ENCODE measurements at regions of chr10 and their contacts with region 1.

Region 1: GRCh38 chr10:80924063-80924952 is 386.6 kb downstream of the SH2D4B start:
- DNase-seq: no peak
- H3K4me3 ChIP-seq: no peak overlapping the region
- H3K27me3 ChIP-seq: no peaks in the 10 kb centered on the region
- CTCF ChIP-seq: peak; percentile 48

Region 2: GRCh38 chr10:80829611-80830010 is 94.7 kb before region 1 on chr10:
- CTCF ChIA-PET with region 1: no interaction called
- POLR2A ChIA-PET with region 1: no interaction called
- DNase-seq: no peak
- H3K4me3 ChIP-seq: no peak overlapping the region
- H3K27me3 ChIP-seq: no peaks in the 10 kb centered on the region
- CTCF ChIP-seq: no peak

Region 3: DNA sequence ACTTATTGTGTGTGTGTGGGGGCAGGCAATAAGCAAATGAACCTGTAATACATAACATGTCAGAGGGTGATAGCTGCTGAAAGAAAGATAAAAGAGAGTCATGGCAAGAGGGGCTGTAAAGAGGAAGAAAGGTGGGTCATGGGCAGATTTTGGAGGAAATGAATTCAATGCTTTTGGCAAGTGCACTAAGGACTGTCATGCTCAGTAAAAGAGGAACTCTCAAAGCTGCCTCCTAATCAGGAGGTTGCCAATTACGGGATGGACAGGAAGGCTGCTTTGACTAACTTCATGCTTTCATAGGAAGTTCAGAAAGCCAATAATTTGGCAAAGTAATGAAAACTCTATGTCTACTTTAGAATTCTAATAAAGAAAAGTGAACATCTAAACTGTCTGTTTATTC is 14.6 kb after region 1 on chr10:
- CTCF ChIA-PET with region 1: interaction called, 16 read pairs
- POLR2A ChIA-PET with region 1: no interaction called
- DNase-seq: no peak
- H3K4me3 ChIP-seq: no peak overlapping the region
- H3K27me3 ChIP-seq: no peaks in the 10 kb centered on the region
- CTCF ChIP-seq: no peak

Measured in BJ (cell line).